Heart left ventricle (tissue), 16 donors: ENCODE measurements at regions of chr18 and their contacts with region 1.

Region 1: DNA sequence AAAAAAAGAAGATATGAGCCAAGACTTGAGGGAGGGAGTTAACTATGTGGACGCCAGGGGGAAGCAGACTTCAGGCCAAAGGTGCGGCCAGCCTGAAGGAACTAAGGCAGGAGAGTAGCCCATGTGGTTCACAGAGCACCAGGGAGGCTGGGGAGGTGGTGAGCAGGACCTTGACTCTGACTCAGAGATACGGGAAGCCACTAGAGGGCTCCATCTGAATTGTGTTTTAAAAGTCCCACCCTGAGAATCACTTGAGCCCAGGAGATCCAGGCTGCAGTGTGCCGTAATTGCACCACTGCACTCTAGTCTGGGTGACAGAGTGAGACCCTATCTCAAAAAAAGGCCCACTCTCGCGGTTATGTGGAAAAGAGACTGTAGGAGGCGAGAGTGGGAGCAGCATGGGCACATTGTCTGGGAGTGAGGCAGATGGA is 12.3 kb downstream of the CEP192 start:
- DNase-seq: peak in 2 of 5 donors; percentile 35 to 42
- ATAC-seq: peak; percentile 65 to 89 (median 78)
- H3K4me3 ChIP-seq: no peak overlapping the region
- H3K27ac ChIP-seq: no peak overlapping the region
- H3K4me1 ChIP-seq: peaks cover 0 to 24% (median 1%) of the 10 kb centered on the region in 12 donors
- H3K27me3 ChIP-seq: no peaks in the 10 kb centered on the region
- CTCF ChIP-seq: peak; percentile 19 to 53 (median 36)
- POLR2A ChIP-seq: no peak

Region 2: DNA sequence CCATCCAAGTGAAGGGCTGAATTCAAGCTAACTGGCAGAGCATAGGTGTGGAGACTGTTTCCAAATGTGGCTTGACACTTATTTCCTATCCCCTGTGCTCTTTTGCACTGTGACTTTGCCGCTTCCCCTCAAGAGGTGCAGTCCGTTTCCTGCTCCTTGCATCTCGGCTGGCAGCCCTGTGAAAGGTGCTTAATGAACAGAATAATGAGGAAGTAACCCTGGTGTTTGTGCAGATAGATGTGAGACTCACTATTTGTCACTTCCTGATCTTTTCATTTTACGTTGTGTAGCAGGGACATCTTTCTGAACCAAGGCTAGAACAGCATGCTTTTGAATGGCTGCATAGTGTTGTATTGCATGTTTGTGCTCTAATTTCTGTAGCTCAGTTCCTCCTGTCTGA is 48.5 kb after region 1 on chr18:
- intact Hi-C with region 1: no loop called
- DNase-seq: no peak
- ATAC-seq: no peak
- H3K4me3 ChIP-seq: no peak overlapping the region
- H3K27ac ChIP-seq: peak overlapping the region in 1 of 12 donors; percentile 11
- H3K4me1 ChIP-seq: peaks cover 0 to 22% (median 0%) of the 10 kb centered on the region in 12 donors
- H3K27me3 ChIP-seq: no peaks in the 10 kb centered on the region
- CTCF ChIP-seq: no peak
- POLR2A ChIP-seq: no peak

Region 3: GRCh38 chr18:13067124-13067523 is 63.6 kb after region 1 on chr18:
- intact Hi-C with region 1: loop called in 1 of 10 experiments (anchors 10 kb)
- DNase-seq: no peak
- ATAC-seq: no peak
- H3K4me3 ChIP-seq: no peak overlapping the region
- H3K27ac ChIP-seq: no peak overlapping the region
- H3K4me1 ChIP-seq: peaks cover 0 to 9% (median 0%) of the 10 kb centered on the region in 12 donors
- H3K27me3 ChIP-seq: no peaks in the 10 kb centered on the region
- CTCF ChIP-seq: no peak
- POLR2A ChIP-seq: no peak

Region 4: GRCh38 chr18:13095466-13095865 is 92.0 kb after region 1 on chr18:
- intact Hi-C with region 1: loop called in 3 of 10 experiments (anchors 10 kb)
- DNase-seq: no peak
- ATAC-seq: no peak
- H3K4me3 ChIP-seq: no peak overlapping the region
- H3K27ac ChIP-seq: no peak overlapping the region
- H3K4me1 ChIP-seq: peaks cover 0 to 5% (median 0%) of the 10 kb centered on the region in 12 donors
- H3K27me3 ChIP-seq: no peaks in the 10 kb centered on the region
- CTCF ChIP-seq: no peak
- POLR2A ChIP-seq: no peak

Region 5: GRCh38 chr18:13103366-13103765 is 99.9 kb after region 1 on chr18:
- intact Hi-C with region 1: loop called in 3 of 10 experiments (anchors 10 kb)
- DNase-seq: no peak
- ATAC-seq: no peak
- H3K4me3 ChIP-seq: no peak overlapping the region
- H3K27ac ChIP-seq: no peak overlapping the region
- H3K4me1 ChIP-seq: peaks cover 0 to 11% (median 0%) of the 10 kb centered on the region in 12 donors
- H3K27me3 ChIP-seq: no peaks in the 10 kb centered on the region
- CTCF ChIP-seq: peak in 3 of 12 donors; percentile 12 to 23 (median 21)
- POLR2A ChIP-seq: no peak

Region 6: GRCh38 chr18:13159579-13159978 is 156.1 kb after region 1 on chr18:
- intact Hi-C with region 1: loop called in 5 of 10 experiments (anchors 1 to 10 kb)
- DNase-seq: no peak
- ATAC-seq: peak in 2 of 4 donors; percentile 29 to 33
- H3K4me3 ChIP-seq: no peak overlapping the region
- H3K27ac ChIP-seq: no peak overlapping the region
- H3K4me1 ChIP-seq: no peaks in the 10 kb centered on the region
- H3K27me3 ChIP-seq: no peaks in the 10 kb centered on the region
- CTCF ChIP-seq: peak; percentile 71 to 88 (median 82)
- POLR2A ChIP-seq: no peak

Region 7: DNA sequence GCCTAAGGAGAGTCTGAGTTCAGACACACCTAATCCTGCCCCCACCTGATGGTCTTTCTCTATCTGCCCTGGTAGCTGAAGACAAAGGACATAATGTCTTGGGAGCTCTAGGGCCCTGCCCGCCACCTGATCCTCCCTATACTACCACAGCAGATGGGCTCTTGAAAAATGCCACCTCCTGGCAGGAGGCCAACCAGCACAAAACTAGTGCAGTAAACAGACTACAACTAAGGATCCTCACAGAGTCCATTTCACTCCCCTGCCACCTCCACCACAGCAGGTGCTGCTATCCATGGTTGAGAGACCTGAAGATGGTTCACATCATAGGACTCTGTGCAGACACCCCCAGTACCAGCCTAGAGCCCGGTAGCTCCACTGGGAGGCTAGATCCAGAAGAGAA is 162.5 kb after region 1 on chr18:
- intact Hi-C with region 1: loop called in 2 of 10 experiments (anchors 5 to 10 kb)
- DNase-seq: no peak
- ATAC-seq: no peak
- H3K4me3 ChIP-seq: no peak overlapping the region
- H3K27ac ChIP-seq: no peak overlapping the region
- H3K4me1 ChIP-seq: no peaks in the 10 kb centered on the region
- H3K27me3 ChIP-seq: no peaks in the 10 kb centered on the region
- CTCF ChIP-seq: no peak
- POLR2A ChIP-seq: no peak